ENCODE measurements at regions of chr5 and their contacts with region 1.

Region 1: GRCh38 chr5:168219515-168220410 is 71.7 kb upstream of the WWC1 start:
- H3K4me3 ChIP-seq: no peak overlapping the region
- H3K27ac ChIP-seq: no peak overlapping the region
- H3K4me1 ChIP-seq: no peaks in the 10 kb centered on the region
- CTCF ChIP-seq: peak; percentile 82; the same call in 1 of the 2 replicates

Region 2: GRCh38 chr5:168039566-168040248 is 180.1 kb before region 1 on chr5:
- CTCF ChIA-PET with region 1: interaction called, 10 read pairs
- POLR2A ChIA-PET with region 1: no interaction called
- H3K4me3 ChIP-seq: no peak overlapping the region
- H3K27ac ChIP-seq: no peak overlapping the region
- H3K4me1 ChIP-seq: no peaks in the 10 kb centered on the region
- CTCF ChIP-seq: no peak

Region 3: GRCh38 chr5:168114444-168115017 is 105.2 kb before region 1 on chr5:
- CTCF ChIA-PET with region 1: interaction called, 24 read pairs
- POLR2A ChIA-PET with region 1: no interaction called
- H3K4me3 ChIP-seq: no peak overlapping the region
- H3K27ac ChIP-seq: no peak overlapping the region
- H3K4me1 ChIP-seq: no peaks in the 10 kb centered on the region
- CTCF ChIP-seq: peak; percentile 57

Region 4: GRCh38 chr5:168656633-168657032 is 436.9 kb after region 1 on chr5:
- CTCF ChIA-PET with region 1: no interaction called
- POLR2A ChIA-PET with region 1: no interaction called
- H3K4me3 ChIP-seq: no peak overlapping the region
- H3K27ac ChIP-seq: no peak overlapping the region
- H3K4me1 ChIP-seq: no peaks in the 10 kb centered on the region
- CTCF ChIP-seq: no peak

Measured in HEK293 (cell line).